Left lung (tissue), 14 donors: ENCODE measurements at regions of chr16 and their contacts with region 1.

Region 1: GRCh38 chr16:2340564-2341455 is at the start of gene ABCA3:
- DNase-seq: peak; percentile 86 to 98 (median 94)
- ATAC-seq: peak; percentile 92
- H3K4me3 ChIP-seq: peak within 1 kb of the TSS; percentile 64 to 69
- H3K27ac ChIP-seq: peak within 1 kb of the TSS; percentile 26 to 77
- H3K4me1 ChIP-seq: peaks cover 0 to 17% of the 10 kb centered on the region in 2 donors
- H3K27me3 ChIP-seq: peaks cover 0 to 43% of the 10 kb centered on the region in 2 donors
- CTCF ChIP-seq: peak; percentile 100
- polyA plus RNA-seq, gene ABCA3: 6.8 to 17.3 (median 9.6) TPM

Region 2: DNA sequence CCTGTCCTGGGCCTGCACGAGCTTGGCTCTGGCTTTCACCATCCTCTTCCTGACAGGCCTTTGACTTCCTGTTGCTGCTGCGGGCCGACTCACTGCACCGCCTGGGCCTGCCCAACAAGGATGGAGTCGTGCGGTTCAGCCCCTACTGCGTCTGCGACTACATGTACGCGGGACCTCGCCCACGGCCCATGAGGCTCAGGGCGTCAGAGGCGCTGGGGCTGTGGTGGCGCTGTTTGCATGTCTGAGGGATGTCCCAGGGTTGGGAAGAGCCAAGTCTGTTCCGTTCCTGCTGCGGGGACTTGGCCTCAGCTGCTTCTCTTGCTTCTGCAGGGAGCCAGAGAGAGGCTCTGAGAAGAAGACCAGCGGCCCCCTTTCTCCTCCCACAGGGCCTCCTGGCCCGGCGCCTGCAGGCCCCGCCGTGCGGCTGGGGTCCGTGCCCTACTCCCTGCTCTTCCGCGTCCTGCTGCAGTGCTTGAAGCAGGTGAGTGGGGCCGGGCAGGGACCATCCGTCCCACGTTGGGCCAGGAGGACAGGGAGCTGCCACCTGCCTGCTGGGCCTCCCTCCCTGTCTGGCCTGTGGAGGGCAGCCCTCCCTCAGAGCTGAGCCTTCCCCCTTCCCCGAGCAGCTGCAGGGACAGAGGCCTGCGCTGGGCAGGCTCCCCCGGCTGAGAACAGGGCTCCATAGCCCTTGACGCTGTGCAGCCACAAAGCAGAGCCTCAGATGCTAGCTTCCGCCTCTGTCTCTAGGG is 269.2 kb before region 1 on chr16:
- intact Hi-C with region 1: no loop called
- DNase-seq: no peak
- ATAC-seq: no peak
- H3K4me3 ChIP-seq: no peak overlapping the region
- H3K27ac ChIP-seq: no peak overlapping the region
- H3K4me1 ChIP-seq: no peaks in the 10 kb centered on the region
- H3K27me3 ChIP-seq: no peaks in the 10 kb centered on the region
- CTCF ChIP-seq: no peak

Region 3: GRCh38 chr16:2121853-2122252 is 219.0 kb before region 1 on chr16:
- intact Hi-C with region 1: no loop called
- DNase-seq: no peak
- ATAC-seq: no peak
- H3K4me3 ChIP-seq: no peak overlapping the region
- H3K27ac ChIP-seq: no peak overlapping the region
- H3K4me1 ChIP-seq: peaks cover 19 to 30% of the 10 kb centered on the region in 2 donors
- H3K27me3 ChIP-seq: peaks cover 0 to 10% of the 10 kb centered on the region in 2 donors
- CTCF ChIP-seq: no peak

Region 4: DNA sequence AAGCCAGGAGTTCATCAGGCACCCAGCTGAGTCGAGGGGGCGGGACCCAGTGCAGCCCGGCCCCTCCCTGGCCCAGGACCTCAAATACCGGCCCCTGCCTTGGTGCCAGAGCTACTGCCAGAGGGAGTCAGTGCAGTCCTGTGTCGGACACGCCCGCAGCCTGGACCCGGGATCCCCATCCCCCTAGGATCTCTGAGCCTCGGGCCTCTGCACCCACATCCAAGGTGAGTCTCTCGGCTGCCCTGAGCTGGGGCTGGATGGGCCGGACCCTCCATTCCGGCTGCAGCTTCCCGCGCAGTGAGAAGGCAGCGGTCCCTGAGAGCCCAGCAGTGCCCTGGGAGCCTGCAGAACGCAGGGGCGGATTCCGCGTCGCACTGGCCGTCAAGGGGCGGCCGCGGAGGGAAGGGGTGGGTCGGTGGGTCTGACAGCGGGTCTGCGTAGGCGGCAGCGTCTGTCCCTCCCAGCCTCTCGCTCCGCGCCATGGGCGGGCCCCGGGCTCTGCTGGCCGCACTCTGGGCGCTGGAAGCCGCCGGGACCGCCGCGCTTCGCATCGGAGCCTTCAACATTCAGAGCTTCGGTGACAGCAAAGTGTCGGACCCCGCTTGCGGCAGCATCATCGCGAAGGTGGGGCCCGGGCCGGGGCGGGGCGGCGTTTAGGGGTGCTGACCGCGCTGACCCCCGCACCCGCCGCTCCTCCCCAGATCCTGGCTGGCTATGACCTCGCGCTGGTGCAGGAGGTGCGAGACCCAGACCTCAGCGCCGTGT is 104.3 kb before region 1 on chr16 and contains the start of gene DNASE1L2:
- intact Hi-C with region 1: no loop called
- DNase-seq: peak in 1 of 4 donors; percentile 44
- ATAC-seq: peak; percentile 44
- H3K4me3 ChIP-seq: peak within 1 kb of the TSS in 1 of 2 donors; percentile 7
- H3K27ac ChIP-seq: no peak within 1 kb of the TSS
- H3K4me1 ChIP-seq: peaks cover 15 to 26% of the 10 kb centered on the region in 2 donors
- H3K27me3 ChIP-seq: peaks cover 16 to 36% of the 10 kb centered on the region in 2 donors
- CTCF ChIP-seq: no peak
- polyA plus RNA-seq, gene DNASE1L2: 0.27 to 1.7 (median 0.90) TPM

Region 5: DNA sequence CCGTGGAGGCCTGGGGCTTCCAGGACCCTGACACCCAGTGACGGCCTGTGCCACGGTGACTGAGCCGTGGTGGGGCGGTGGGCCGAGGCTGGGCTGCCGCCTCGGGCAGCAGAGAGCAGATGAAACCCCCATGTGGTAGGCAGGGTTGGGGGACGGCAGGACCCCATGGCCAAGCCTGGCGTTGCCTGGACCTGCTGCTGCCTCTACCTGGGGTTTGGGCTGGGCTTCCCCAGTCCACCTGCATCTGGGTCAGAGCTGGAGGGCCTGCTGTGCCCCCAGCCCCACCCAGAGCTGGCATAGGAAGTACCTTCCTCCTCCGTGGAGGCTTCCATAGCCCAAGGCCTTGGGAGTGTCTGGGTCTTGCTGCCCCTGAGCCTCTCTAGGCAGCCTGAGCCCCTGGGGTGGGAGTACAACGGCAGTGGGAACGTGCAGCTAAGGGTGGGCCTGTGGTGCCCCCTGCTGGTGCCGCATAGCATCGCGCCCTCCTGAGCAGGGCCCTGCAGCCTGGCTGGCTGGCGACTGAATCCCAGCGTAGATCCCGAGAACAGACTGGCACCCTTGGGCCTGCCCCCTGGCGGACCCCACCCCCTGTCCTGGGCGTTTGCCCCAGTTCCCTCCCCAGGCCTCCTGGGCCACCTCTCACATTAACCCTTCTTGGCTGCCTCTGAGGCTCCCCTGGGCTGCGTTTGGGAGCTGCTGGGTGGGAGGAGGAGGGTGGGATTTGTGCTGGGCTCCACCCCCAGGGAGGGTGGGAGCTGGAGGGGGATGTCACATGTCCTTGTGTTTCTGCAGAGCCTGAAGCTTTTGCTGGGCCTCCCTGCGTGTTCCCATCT is 160.3 kb after region 1 on chr16:
- intact Hi-C with region 1: loop called in 1 of 2 experiments (anchors 5 kb)
- DNase-seq: peak; percentile 81 to 96 (median 91)
- ATAC-seq: peak; percentile 85
- H3K4me3 ChIP-seq: no peak overlapping the region
- H3K27ac ChIP-seq: no peak overlapping the region
- H3K4me1 ChIP-seq: peaks cover 14 to 54% of the 10 kb centered on the region in 2 donors
- H3K27me3 ChIP-seq: no peaks in the 10 kb centered on the region
- CTCF ChIP-seq: peak; percentile 99